Activated CD4-positive, alpha-beta T cell treated with anti-CD3 and anti-CD28 coated beads, Interleukin-2, amount 10 ng/mL, durations not matched to agents 24 days and 14 days (primary cell): ENCODE measurements at regions of chr5 and their contacts with region 1.

Region 1: DNA sequence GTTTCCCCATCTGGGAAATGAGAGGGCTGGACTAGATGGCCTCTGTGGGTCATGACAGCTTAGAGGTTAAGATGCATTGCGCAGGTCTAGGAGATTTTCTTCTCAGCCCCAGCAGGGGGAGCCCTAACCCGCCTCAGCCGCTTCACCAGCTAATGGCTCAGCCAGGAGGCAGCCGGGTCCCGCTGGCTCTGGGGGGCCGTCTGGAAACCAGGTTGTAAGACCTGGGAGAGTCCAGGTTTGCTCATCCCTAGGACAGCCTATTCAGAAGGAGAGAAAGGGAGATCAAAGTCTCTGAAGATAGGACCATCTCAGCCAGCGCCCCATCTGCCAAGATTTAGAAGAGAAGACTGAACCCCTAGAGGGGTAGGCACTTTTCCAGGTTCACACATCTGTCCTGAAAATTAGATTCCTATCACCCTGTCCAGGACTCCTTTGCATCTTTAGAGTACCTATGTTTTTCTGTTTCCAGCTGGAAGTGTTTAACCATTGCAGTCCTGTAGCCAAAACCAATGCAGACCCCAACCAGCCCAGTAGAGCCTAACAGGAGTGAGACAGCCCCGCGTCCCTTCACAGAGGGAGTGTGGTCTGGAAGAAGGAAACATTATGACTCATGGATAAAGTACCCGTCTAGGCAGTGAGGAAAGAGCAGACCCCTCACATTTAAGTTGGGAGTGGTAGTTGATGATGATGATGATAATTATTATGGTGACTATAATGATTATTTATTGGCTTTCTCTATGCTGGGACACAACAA is 27.5 kb downstream of the SPARC start:
- DNase-seq: peak; percentile 93
- H3K4me3 Mint-ChIP-seq: no peak overlapping the region
- H3K27ac Mint-ChIP-seq: peak overlapping the region; percentile 31
- H3K4me1 Mint-ChIP-seq: peaks cover 11% of the 10 kb centered on the region
- H3K27me3 Mint-ChIP-seq: peaks cover 15% of the 10 kb centered on the region

Region 2: DNA sequence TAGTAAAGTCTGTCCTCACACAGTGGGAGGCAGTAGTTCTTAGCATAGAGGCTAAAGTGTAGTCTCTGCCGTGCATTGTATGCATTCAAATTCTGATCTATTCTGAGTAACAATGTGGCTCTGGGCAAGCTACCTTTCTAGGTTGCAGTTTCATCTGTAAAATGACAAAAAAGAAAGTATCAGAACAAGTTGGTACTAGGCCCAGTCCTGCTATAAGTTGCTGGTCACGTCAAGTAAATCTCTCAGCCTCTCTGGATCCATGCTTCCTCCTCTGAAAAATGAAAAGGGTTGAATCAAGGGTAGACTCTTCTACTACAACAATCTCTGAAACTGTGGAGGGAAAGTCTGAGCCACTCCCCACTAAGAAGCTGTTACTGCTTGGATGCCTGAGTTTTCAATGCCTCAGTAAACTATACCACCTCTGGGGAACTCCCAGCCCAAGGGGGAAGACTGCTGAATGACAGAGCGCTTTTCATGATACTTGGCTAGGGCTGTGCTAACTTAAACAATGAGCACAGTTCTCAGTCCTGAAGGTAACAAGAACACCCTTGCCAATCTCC is 62.0 kb after region 1 on chr5:
- intact Hi-C with region 1: loop called (anchors 1 kb)
- DNase-seq: peak; percentile 60
- H3K4me3 Mint-ChIP-seq: no peak overlapping the region
- H3K27ac Mint-ChIP-seq: peak overlapping the region; percentile 79
- H3K4me1 Mint-ChIP-seq: peaks cover 6% of the 10 kb centered on the region
- H3K27me3 Mint-ChIP-seq: no peaks in the 10 kb centered on the region

Region 3: GRCh38 chr5:151740336-151740942 is 81.3 kb after region 1 on chr5:
- intact Hi-C with region 1: loop called (anchors 1 kb)
- DNase-seq: peak; percentile 86
- H3K4me3 Mint-ChIP-seq: no peak overlapping the region
- H3K27ac Mint-ChIP-seq: no peak overlapping the region
- H3K4me1 Mint-ChIP-seq: peaks cover 19% of the 10 kb centered on the region
- H3K27me3 Mint-ChIP-seq: no peaks in the 10 kb centered on the region

Region 4: GRCh38 chr5:151771259-151772028 is 112.3 kb after region 1 on chr5 and contains the start of gene G3BP1:
- intact Hi-C with region 1: loop called (anchors 1 kb)
- DNase-seq: peak; percentile 100
- H3K4me3 Mint-ChIP-seq: peak within 1 kb of the TSS; percentile 98
- H3K27ac Mint-ChIP-seq: peak within 1 kb of the TSS; percentile 92
- H3K4me1 Mint-ChIP-seq: peaks cover 30% of the 10 kb centered on the region
- H3K27me3 Mint-ChIP-seq: no peaks in the 10 kb centered on the region
- total RNA-seq, gene G3BP1: 362 and 367 TPM in 2 replicates

Region 5: DNA sequence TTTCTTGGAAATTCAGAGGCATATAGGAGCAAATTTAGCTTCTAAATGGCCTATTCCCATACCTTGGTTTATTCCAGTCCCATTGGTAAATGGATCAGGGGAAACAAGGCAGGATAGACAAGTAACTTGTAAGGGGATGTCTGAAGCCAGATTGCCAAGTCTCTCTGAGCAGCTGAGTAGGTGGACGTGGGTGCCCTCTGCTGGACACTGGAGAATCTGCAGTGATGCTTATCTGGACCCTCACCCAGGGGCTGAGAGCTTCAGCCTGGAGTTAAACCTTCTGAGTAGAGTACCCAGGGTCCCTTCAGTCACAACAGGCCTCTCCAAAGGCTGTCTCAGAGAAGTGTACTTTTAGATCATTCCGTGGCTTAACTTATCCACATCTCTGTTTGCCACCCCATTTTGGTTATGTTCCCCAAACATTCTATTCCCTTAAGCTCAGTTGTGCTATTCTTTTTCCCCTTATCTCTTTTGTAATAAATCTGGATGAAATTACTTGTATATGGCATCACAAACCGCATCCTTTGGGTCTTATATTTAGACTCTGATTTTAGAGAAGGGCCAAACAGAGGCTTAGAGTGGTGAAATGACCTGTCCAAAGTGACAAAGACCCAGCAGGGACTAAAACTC is 483.8 kb after region 1 on chr5:
- intact Hi-C with region 1: loop called (anchors 2 kb)
- DNase-seq: peak; percentile 86
- H3K4me3 Mint-ChIP-seq: no peak overlapping the region
- H3K27ac Mint-ChIP-seq: no peak overlapping the region
- H3K4me1 Mint-ChIP-seq: no peaks in the 10 kb centered on the region
- H3K27me3 Mint-ChIP-seq: peaks cover 3% of the 10 kb centered on the region